Naive thymus-derived CD4-positive, alpha-beta T cell (primary cell): ENCODE measurements at regions of chr13 and their contacts with region 1.

Region 1: GRCh38 chr13:49443704-49444523 is at the starts of genes CAB39L and SETDB2:
- DNase-seq: peak; percentile 91 to 100 (median 99)
- ATAC-seq: peak; percentile 95
- H3K4me3 ChIP-seq: peak within 1 kb of the TSS; percentile 92
- H3K4me3 Mint-ChIP-seq: peak within 1 kb of the TSS; percentile 91 to 97 (median 95)
- H3K27ac ChIP-seq: peak within 1 kb of the TSS; percentile 83
- H3K27ac Mint-ChIP-seq: peak within 1 kb of the TSS; percentile 95 to 99 (median 97)
- H3K4me1 ChIP-seq: peaks cover 22 to 35% of the 10 kb centered on the region in 2 donors
- H3K4me1 Mint-ChIP-seq: peaks cover 30 to 58% (median 53%) of the 10 kb centered on the region in 7 donors
- H3K27me3 ChIP-seq: no peaks in the 10 kb centered on the region
- H3K27me3 Mint-ChIP-seq: no peaks in the 10 kb centered on the region
- total RNA-seq, gene CAB39L: 2.9 to 5.9 (median 4.6) TPM
- total RNA-seq, gene SETDB2: 16.7 to 30.0 (median 20.3) TPM

Region 2: DNA sequence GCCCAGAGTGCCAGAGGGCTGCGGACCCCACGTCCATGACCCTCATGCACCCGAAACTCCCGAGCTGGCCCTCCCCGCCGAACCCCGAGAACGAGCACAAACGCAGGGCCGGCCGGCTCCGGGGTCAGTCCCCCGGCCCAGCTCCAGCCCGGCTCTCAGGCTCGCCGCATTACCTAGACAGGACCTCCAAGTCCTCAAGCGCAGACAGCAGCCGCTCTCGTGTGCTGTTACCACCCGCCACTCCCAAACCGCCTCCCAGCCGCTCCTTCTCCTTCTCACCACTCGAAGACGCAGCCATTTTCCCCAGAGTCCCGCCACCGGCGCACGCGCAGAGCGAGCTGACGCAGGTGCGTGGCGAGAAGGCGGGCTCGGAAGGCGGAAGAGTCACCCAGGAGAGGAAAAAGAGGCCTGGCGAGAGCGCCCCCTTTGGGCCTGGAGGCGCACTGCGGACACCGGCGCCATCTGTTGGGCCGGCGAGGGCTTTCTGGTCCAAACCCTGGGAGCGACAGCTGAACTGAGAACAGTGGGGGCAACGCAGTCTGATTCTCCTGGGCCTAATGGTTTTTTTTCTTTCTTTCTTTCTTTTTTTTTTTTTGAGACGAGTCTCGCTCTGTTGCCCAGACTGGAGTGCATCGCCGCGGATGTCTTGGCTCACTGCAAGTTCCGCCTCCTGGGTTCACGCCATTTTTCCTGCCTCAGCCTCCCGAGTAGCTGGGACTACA is 1349.0 kb before region 1 on chr13 and contains the start of gene MED4:
- CTCF ChIA-PET with region 1: no interaction called
- POLR2A ChIA-PET with region 1: no interaction called
- intact Hi-C with region 1: loop called (anchors 1 to 10 kb)
- DNase-seq: peak; percentile 94 to 99 (median 98)
- ATAC-seq: peak; percentile 100
- H3K4me3 ChIP-seq: peak within 1 kb of the TSS; percentile 90
- H3K4me3 Mint-ChIP-seq: peak within 1 kb of the TSS; percentile 94 to 99 (median 96)
- H3K27ac ChIP-seq: peak within 1 kb of the TSS; percentile 99
- H3K27ac Mint-ChIP-seq: peak within 1 kb of the TSS; percentile 92 to 98 (median 96)
- H3K4me1 ChIP-seq: peaks cover 13 to 26% of the 10 kb centered on the region in 2 donors
- H3K4me1 Mint-ChIP-seq: peaks cover 26 to 56% (median 48%) of the 10 kb centered on the region in 7 donors
- H3K27me3 ChIP-seq: no peaks in the 10 kb centered on the region
- H3K27me3 Mint-ChIP-seq: peaks cover 0 to 9% (median 0%) of the 10 kb centered on the region in 5 donors
- total RNA-seq, gene MED4: 43.4 to 60.9 (median 50.0) TPM

Region 3: GRCh38 chr13:48975856-48976575 is 467.9 kb before region 1 on chr13 and contains the start of gene FNDC3A:
- CTCF ChIA-PET with region 1: no interaction called
- POLR2A ChIA-PET with region 1: interaction called, 7 read pairs
- intact Hi-C with region 1: loop called (anchors 1 kb)
- DNase-seq: peak; percentile 84 to 90 (median 86)
- ATAC-seq: peak; percentile 87
- H3K4me3 ChIP-seq: peak within 1 kb of the TSS; percentile 82
- H3K4me3 Mint-ChIP-seq: peak within 1 kb of the TSS; percentile 92 to 100 (median 98)
- H3K27ac ChIP-seq: peak within 1 kb of the TSS; percentile 95
- H3K27ac Mint-ChIP-seq: peak within 1 kb of the TSS; percentile 93 to 99 (median 99)
- H3K4me1 ChIP-seq: peaks cover 13 to 28% of the 10 kb centered on the region in 2 donors
- H3K4me1 Mint-ChIP-seq: peaks cover 35 to 69% (median 49%) of the 10 kb centered on the region in 7 donors
- H3K27me3 ChIP-seq: no peaks in the 10 kb centered on the region
- H3K27me3 Mint-ChIP-seq: peaks cover 0 to 6% (median 0%) of the 10 kb centered on the region in 5 donors
- total RNA-seq, gene FNDC3A: 34.2 to 46.4 (median 39.1) TPM

Region 4: DNA sequence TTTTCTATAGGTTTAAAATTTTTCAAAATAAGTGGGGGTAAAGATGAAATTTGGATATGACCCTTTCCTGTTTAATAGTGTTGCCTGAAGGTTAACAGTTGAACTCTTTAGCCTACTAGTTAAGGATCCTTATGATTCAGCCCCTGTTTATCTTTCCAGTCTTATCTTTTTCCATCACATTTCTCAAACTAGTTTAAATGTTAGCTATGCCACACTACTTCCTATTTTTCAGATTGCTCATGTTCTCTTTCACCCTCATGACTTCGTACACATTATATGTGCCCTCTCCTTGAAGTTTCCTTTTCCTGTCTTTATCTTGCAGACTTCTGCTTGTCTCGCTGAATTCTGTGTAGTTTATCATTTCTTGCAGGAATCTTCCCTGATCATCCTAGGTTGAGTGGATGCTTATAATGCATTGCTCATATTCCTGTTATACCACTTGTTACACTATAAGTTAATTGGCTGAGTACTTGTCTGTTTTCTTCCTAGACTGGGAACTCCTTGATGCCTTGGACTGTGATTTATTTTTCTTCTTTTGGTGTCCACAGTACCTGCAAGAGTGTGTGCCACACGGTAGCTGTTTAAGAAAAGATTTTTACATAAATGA is 381.5 kb before region 1 on chr13:
- CTCF ChIA-PET with region 1: no interaction called
- POLR2A ChIA-PET with region 1: no interaction called
- intact Hi-C with region 1: no loop called
- DNase-seq: no peak
- ATAC-seq: peak; percentile 42
- H3K4me3 ChIP-seq: no peak overlapping the region
- H3K4me3 Mint-ChIP-seq: peak overlapping the region in 1 of 10 donors; percentile 27
- H3K27ac ChIP-seq: no peak overlapping the region
- H3K27ac Mint-ChIP-seq: peak overlapping the region in 3 of 9 donors; percentile 2 to 39 (median 21)
- H3K4me1 ChIP-seq: no peaks in the 10 kb centered on the region
- H3K4me1 Mint-ChIP-seq: peaks cover 9 to 16% (median 13%) of the 10 kb centered on the region in 7 donors
- H3K27me3 ChIP-seq: no peaks in the 10 kb centered on the region
- H3K27me3 Mint-ChIP-seq: no peaks in the 10 kb centered on the region

Region 5: DNA sequence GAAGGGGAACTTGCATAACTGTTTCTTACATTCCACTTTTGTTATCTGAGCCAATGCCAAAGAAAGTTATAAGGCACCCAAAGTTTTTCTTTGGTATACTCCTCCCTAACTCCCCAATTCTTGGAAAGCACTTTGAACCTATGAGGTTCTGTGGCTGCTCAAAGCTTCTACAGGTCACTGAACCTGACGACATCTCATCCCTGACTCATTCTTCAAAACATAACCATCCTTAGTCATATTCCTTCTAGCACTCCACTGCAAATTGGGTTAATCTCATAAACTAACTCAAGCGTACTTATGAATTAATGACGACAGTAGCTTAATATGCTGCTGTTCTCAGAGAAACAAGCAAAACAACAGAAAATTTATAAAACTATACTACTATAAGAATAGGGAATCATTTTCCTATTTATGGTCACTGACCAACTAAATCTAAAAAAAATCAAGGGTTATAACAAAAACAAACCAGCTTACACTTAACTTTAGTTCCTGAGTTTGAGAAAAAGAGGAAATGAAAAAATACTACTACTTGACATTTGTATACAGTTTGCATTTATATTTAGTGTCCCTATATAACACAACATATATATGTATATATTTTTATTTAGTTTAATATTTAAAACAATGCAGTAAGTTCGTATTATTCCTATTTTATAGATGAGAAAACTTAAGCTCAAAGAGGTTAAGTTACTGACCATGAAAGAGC is 69.2 kb before region 1 on chr13:
- CTCF ChIA-PET with region 1: no interaction called
- POLR2A ChIA-PET with region 1: interaction called, 15 read pairs
- intact Hi-C with region 1: loop called in 1 of 2 experiments (anchors 1 kb)
- DNase-seq: no peak
- ATAC-seq: no peak
- H3K4me3 ChIP-seq: no peak overlapping the region
- H3K4me3 Mint-ChIP-seq: peak overlapping the region in 1 of 10 donors; percentile 20
- H3K27ac ChIP-seq: no peak overlapping the region
- H3K27ac Mint-ChIP-seq: peak overlapping the region in 1 of 9 donors; percentile 42
- H3K4me1 ChIP-seq: peaks cover 6 to 20% of the 10 kb centered on the region in 2 donors
- H3K4me1 Mint-ChIP-seq: peaks cover 6 to 42% (median 33%) of the 10 kb centered on the region in 7 donors
- H3K27me3 ChIP-seq: no peaks in the 10 kb centered on the region
- H3K27me3 Mint-ChIP-seq: peaks cover 0 to 15% (median 4%) of the 10 kb centered on the region in 5 donors

Region 6: GRCh38 chr13:49517461-49517860 is 73.5 kb after region 1 on chr13:
- CTCF ChIA-PET with region 1: no interaction called
- POLR2A ChIA-PET with region 1: no interaction called
- intact Hi-C with region 1: loop called in 1 of 2 experiments (anchors 2 kb)
- DNase-seq: no peak
- ATAC-seq: no peak
- H3K4me3 ChIP-seq: no peak overlapping the region
- H3K4me3 Mint-ChIP-seq: no peak overlapping the region
- H3K27ac ChIP-seq: no peak overlapping the region
- H3K27ac Mint-ChIP-seq: peak overlapping the region in 3 of 9 donors; percentile 10 to 65 (median 52)
- H3K4me1 ChIP-seq: no peaks in the 10 kb centered on the region
- H3K4me1 Mint-ChIP-seq: peaks cover 6 to 18% (median 13%) of the 10 kb centered on the region in 7 donors
- H3K27me3 ChIP-seq: no peaks in the 10 kb centered on the region
- H3K27me3 Mint-ChIP-seq: no peaks in the 10 kb centered on the region

Region 7: DNA sequence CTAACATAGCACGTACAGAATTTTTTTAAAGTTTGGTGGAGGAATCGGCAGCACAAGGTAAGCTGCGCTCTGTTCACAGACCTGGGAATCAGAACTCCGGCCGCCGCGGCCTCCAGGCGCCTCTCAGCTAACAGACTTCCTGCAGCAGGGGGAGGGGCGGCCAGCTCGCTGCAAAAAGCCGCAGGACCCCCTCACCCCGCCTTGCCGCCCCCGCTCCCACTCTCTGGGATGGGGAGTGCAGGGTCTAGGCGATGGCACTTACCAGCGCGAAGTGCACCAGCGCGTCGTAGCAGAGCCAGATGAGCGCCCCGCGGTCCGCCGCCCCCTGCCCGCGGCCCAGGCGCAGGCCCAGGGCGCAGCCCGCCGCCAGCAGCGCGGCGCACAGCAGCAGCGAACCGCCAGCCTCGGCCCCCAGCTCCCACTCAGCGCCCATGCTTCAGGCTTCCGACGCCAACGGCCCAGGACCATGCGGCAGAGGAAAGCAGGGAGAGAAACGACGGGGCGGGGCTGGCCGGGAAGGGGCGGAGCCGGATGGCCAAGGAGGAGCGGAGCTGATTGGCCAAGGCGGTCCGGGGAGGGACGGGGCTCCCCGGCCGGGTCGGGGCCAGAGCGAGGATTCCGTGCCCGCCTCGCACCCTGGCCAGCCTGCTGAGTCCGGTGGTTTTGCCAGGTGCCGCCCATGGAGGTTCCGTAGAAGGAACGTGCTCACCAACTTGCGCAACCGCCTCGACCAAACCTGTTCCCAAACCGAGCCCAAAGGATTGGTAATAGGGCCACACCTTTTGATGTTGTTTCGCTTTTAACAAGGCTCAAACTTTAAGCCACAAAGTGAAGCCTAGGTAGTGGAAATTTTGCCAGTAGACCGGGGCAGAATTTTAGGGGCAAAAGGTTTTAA is 247.3 kb after region 1 on chr13 and contains the start of gene EBPL:
- CTCF ChIA-PET with region 1: no interaction called
- POLR2A ChIA-PET with region 1: interaction called, 3 read pairs
- intact Hi-C with region 1: loop called (anchors 1 to 5 kb)
- DNase-seq: peak; percentile 57 to 91 (median 73)
- ATAC-seq: peak; percentile 97
- H3K4me3 ChIP-seq: peak within 1 kb of the TSS; percentile 67
- H3K4me3 Mint-ChIP-seq: peak within 1 kb of the TSS; percentile 88 to 96 (median 92)
- H3K27ac ChIP-seq: peak within 1 kb of the TSS; percentile 56
- H3K27ac Mint-ChIP-seq: peak within 1 kb of the TSS; percentile 73 to 91 (median 81)
- H3K4me1 ChIP-seq: peaks cover 0 to 17% of the 10 kb centered on the region in 2 donors
- H3K4me1 Mint-ChIP-seq: peaks cover 21 to 58% (median 45%) of the 10 kb centered on the region in 7 donors
- H3K27me3 ChIP-seq: no peaks in the 10 kb centered on the region
- H3K27me3 Mint-ChIP-seq: no peaks in the 10 kb centered on the region
- total RNA-seq, gene EBPL: 13.3 to 34.9 (median 20.4) TPM

Region 8: GRCh38 chr13:49904729-49905456 is 461.0 kb after region 1 on chr13:
- CTCF ChIA-PET with region 1: no interaction called
- POLR2A ChIA-PET with region 1: no interaction called
- intact Hi-C with region 1: no loop called
- DNase-seq: no peak
- ATAC-seq: no peak
- H3K4me3 ChIP-seq: no peak overlapping the region
- H3K4me3 Mint-ChIP-seq: peak overlapping the region in 1 of 10 donors; percentile 8
- H3K27ac ChIP-seq: no peak overlapping the region
- H3K27ac Mint-ChIP-seq: peak overlapping the region in 1 of 9 donors; percentile 56
- H3K4me1 ChIP-seq: no peaks in the 10 kb centered on the region
- H3K4me1 Mint-ChIP-seq: peaks cover 0 to 3% (median 0%) of the 10 kb centered on the region in 7 donors
- H3K27me3 ChIP-seq: no peaks in the 10 kb centered on the region
- H3K27me3 Mint-ChIP-seq: no peaks in the 10 kb centered on the region

Region 9: GRCh38 chr13:50123862-50124536 is 680.1 kb after region 1 on chr13:
- CTCF ChIA-PET with region 1: no interaction called
- POLR2A ChIA-PET with region 1: interaction called, 6 read pairs
- intact Hi-C with region 1: loop called (anchors 1 kb)
- DNase-seq: peak in 7 of 9 donors; percentile 46 to 88 (median 64)
- ATAC-seq: peak; percentile 82
- H3K4me3 ChIP-seq: peak overlapping the region; percentile 52
- H3K4me3 Mint-ChIP-seq: peak overlapping the region; percentile 86 to 96 (median 93)
- H3K27ac ChIP-seq: peak overlapping the region; percentile 95
- H3K27ac Mint-ChIP-seq: peak overlapping the region; percentile 90 to 99 (median 97)
- H3K4me1 ChIP-seq: peaks cover 24 to 29% of the 10 kb centered on the region in 2 donors
- H3K4me1 Mint-ChIP-seq: peaks cover 25 to 61% (median 50%) of the 10 kb centered on the region in 7 donors
- H3K27me3 ChIP-seq: peaks cover 0 to 11% of the 10 kb centered on the region in 2 donors
- H3K27me3 Mint-ChIP-seq: peaks cover 1 to 15% (median 12%) of the 10 kb centered on the region in 5 donors